Activated B cell treated with CpG ODN at 0.5 μM for 24 hours (primary cell): ENCODE measurements at regions of chr7 and their contacts with region 1.

Region 1: GRCh38 chr7:128343554-128344430 is at the start of gene RBM28:
- DNase-seq: peak; percentile 80
- ATAC-seq: peak; percentile 95
- H3K4me3 Mint-ChIP-seq: peak within 1 kb of the TSS; percentile 97
- H3K27ac Mint-ChIP-seq: peak within 1 kb of the TSS; percentile 95
- H3K4me1 Mint-ChIP-seq: peaks cover 26% of the 10 kb centered on the region
- H3K27me3 Mint-ChIP-seq: no peaks in the 10 kb centered on the region
- CTCF ChIP-seq: no peak
- total RNA-seq, gene RBM28: 45.7 and 54.4 TPM in 2 replicates

Region 2: GRCh38 chr7:127478024-127478355 is 865.8 kb before region 1 on chr7:
- CTCF ChIA-PET with region 1: no interaction called
- POLR2A ChIA-PET with region 1: no interaction called
- intact Hi-C with region 1: no loop called
- DNase-seq: no peak
- ATAC-seq: no peak
- H3K4me3 Mint-ChIP-seq: no peak overlapping the region
- H3K27ac Mint-ChIP-seq: no peak overlapping the region
- H3K4me1 Mint-ChIP-seq: no peaks in the 10 kb centered on the region
- H3K27me3 Mint-ChIP-seq: peaks cover 45% of the 10 kb centered on the region
- CTCF ChIP-seq: no peak

Region 3: DNA sequence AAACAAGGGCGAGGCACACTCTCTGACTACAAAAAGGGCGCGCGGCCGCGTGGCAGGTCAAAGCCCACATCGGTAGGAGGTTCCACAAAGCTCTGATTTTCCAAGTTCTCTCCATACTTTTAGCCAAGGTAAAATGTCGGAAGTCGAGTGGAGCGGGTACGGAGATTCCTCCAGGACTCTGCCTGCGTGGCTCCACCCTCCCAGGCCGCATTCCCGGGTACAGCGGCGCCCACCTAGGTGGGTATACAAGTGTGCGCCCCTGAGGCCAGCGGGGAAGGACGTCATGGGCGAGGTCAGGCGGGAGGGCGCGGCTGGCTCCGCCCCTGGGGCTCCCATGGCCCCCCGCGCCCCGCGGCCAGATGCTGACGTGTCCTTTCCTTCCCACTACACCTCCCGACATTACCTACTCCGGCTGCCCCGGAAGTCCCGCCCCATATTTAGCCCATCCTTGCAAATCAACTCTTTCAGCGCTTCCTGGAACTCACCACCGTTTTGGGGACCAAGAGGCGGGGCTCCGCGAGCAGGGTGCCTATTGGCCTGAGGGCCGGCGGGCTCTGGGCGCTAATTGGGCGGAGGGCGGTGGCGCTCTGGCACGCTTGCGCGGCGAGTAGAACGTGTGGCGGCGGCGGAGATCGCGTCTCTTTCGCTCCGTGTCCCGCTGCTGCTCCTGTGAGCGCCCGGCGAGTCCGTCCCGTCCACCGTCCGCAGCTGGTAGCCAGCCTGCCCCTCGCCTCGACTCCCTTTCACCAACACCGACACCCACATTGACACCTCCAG is 692.0 kb before region 1 on chr7 and contains the start of gene SND1:
- CTCF ChIA-PET with region 1: no interaction called
- POLR2A ChIA-PET with region 1: no interaction called
- intact Hi-C with region 1: loop called (anchors 1 kb)
- DNase-seq: peak; percentile 93
- ATAC-seq: peak; percentile 92
- H3K4me3 Mint-ChIP-seq: no peak within 1 kb of the TSS
- H3K27ac Mint-ChIP-seq: peak within 1 kb of the TSS; percentile 97
- H3K4me1 Mint-ChIP-seq: peaks cover 49% of the 10 kb centered on the region
- H3K27me3 Mint-ChIP-seq: no peaks in the 10 kb centered on the region
- CTCF ChIP-seq: no peak
- total RNA-seq, gene SND1: 204 and 215 TPM in 2 replicates

Region 4: DNA sequence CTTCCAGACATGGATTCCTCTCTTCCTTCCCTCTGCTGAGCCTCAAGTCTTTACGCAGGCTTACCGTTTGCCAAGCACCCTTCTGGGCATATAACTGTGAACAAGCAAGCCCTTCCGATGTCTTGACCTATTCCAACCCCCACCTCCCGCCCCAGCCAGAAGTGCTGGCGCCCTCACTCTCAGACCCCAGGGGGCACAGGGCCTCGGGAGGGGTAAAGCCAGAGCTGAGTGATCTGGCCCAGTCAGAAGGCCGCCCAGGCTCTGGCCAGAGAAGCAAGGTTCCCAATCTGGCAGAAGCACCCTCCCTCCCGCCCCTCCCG is 16.5 kb after region 1 on chr7:
- CTCF ChIA-PET with region 1: no interaction called
- POLR2A ChIA-PET with region 1: no interaction called
- intact Hi-C with region 1: no loop called
- DNase-seq: no peak
- ATAC-seq: no peak
- H3K4me3 Mint-ChIP-seq: no peak overlapping the region
- H3K27ac Mint-ChIP-seq: no peak overlapping the region
- H3K4me1 Mint-ChIP-seq: peaks cover 15% of the 10 kb centered on the region
- H3K27me3 Mint-ChIP-seq: peaks cover 49% of the 10 kb centered on the region
- CTCF ChIP-seq: no peak

Region 5: DNA sequence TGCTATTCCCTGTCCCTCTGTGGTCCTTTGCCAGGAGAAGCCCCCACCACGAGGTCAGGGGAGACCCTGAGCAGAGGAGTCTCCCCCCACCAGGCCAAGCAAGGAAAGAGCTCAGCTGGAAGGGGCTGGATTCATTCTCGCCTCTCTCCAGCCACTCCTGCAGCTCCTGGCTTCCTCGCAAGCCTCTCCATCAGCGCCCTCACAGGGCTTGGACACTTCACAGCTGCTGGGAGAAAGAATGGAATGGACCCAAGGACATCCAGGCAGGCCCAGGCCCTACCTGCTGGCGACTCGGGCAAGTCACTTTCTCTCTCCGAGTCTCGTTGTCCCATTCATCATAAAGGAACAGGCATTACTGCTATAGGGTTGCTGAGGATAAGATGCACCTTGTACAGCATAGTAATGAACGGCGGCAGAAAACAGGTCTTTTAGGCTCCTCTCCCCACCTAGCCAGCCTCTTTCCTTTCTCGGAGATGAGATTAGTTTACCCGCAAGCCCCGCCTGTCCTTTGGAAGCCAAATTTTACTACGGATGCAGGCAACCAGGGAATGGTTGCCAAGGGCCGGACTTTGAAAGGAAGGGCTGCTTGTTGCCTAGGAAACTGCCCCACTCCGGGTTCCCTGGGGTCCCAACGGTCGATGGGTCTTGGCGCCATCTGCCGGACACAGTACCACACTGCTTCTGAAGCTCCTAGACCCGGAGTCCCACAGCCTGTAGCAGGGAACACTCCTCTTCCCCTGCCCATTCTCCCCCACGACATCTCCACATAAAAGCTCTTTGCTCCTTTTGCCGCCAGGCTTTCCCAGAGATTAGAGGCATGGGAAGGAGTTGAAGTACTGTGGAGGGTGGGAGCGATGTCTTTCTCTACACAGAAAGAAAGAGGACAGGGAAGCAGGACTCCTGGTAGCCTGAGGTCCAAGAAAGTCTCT is 43.7 kb after region 1 on chr7:
- CTCF ChIA-PET with region 1: interaction called, 49 read pairs
- POLR2A ChIA-PET with region 1: interaction called, 5 read pairs
- intact Hi-C with region 1: loop called (anchors 1 kb)
- DNase-seq: peak; percentile 55
- ATAC-seq: peak; percentile 94
- H3K4me3 Mint-ChIP-seq: no peak overlapping the region
- H3K27ac Mint-ChIP-seq: no peak overlapping the region
- H3K4me1 Mint-ChIP-seq: peaks cover 5% of the 10 kb centered on the region
- H3K27me3 Mint-ChIP-seq: no peaks in the 10 kb centered on the region
- CTCF ChIP-seq: no peak

Region 6: GRCh38 chr7:128409596-128410160 is 65.9 kb after region 1 on chr7 and contains the start of gene IMPDH1:
- CTCF ChIA-PET with region 1: no interaction called
- POLR2A ChIA-PET with region 1: interaction called, 4 read pairs
- intact Hi-C with region 1: loop called (anchors 2 kb)
- DNase-seq: peak; percentile 91
- ATAC-seq: peak; percentile 76
- H3K4me3 Mint-ChIP-seq: peak within 1 kb of the TSS; percentile 91
- H3K27ac Mint-ChIP-seq: peak within 1 kb of the TSS; percentile 72
- H3K4me1 Mint-ChIP-seq: peaks cover 40% of the 10 kb centered on the region
- H3K27me3 Mint-ChIP-seq: no peaks in the 10 kb centered on the region
- CTCF ChIP-seq: no peak
- total RNA-seq, gene IMPDH1: 42.3 and 45.8 TPM in 2 replicates

Region 7: DNA sequence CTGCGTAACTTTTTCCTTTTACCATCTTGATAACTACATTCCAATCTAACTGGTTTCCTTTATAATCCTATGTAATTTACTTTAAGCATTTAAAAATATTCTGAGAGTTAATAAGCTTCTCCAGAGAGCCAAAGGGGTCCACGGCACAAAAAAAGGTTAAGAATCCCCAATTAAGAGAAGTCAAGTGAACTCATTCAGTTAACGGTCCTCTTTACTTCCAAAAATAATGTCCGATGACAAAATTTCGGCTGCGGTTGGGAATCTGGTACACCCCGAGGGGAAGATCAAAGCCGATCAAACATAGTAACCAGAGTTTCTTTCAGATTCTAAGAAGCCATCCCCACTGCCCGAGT is 1707.0 kb after region 1 on chr7:
- CTCF ChIA-PET with region 1: no interaction called
- POLR2A ChIA-PET with region 1: no interaction called
- intact Hi-C with region 1: loop called (anchors 2 kb)
- DNase-seq: no peak
- ATAC-seq: no peak
- H3K4me3 Mint-ChIP-seq: peak overlapping the region; percentile 98
- H3K27ac Mint-ChIP-seq: peak overlapping the region; percentile 93
- H3K4me1 Mint-ChIP-seq: peaks cover 12% of the 10 kb centered on the region
- H3K27me3 Mint-ChIP-seq: no peaks in the 10 kb centered on the region
- CTCF ChIP-seq: no peak